ENCODE measurements at regions of chr3 and their contacts with region 1.

Region 1: GRCh38 chr3:158644345-158644908 is at the start of gene GFM1:
- DNase-seq: peak; percentile 75
- ATAC-seq: peak; percentile 96
- H3K4me3 Mint-ChIP-seq: peak within 1 kb of the TSS; percentile 99
- H3K27ac Mint-ChIP-seq: peak within 1 kb of the TSS; percentile 90
- H3K4me1 Mint-ChIP-seq: peaks cover 24% of the 10 kb centered on the region
- H3K27me3 Mint-ChIP-seq: no peaks in the 10 kb centered on the region
- CTCF ChIP-seq: peak; percentile 46
- total RNA-seq, gene GFM1: 46.8 and 56.4 TPM in 2 replicates

Region 2: DNA sequence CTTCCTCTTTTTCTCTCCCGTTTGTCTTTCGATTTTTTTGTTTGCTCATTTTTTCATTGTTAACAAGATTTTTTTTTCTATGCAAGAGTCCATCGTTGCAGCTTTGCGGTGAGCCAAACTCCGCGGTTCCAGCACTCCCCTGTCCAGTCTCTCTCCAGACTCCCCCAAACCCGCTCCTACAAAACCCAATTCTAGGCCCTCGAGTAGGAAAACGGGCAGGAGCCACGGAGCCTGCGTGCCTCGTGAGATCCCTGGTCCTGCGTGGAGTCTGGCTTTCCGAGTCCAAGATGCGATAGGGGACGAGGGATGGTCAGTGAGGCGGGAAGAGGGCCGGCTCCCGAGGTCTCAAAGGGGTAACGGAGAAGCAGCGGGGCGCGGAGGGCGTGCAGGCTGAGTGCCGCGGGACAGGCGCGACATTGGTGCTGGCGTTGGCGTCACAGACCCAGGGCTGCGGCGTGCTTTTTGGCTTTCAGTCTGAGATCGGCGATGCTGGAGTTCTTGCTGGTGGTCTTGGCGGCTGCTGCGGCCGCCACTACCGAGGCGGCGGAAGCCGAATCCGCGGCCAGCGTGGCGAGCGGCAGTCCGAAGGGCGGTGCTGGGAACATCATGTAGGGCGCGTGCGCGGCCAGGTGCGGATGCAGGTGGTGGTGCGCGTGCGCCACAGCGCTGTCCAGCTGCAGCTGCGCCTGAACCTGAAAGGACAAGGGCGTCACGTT is 546.7 kb before region 1 on chr3:
- CTCF ChIA-PET with region 1: no interaction called
- POLR2A ChIA-PET with region 1: no interaction called
- intact Hi-C with region 1: loop called (anchors 5 kb)
- DNase-seq: peak; percentile 79
- ATAC-seq: peak; percentile 93
- H3K4me3 Mint-ChIP-seq: peak overlapping the region; percentile 98
- H3K27ac Mint-ChIP-seq: peak overlapping the region; percentile 74
- H3K4me1 Mint-ChIP-seq: peaks cover 22% of the 10 kb centered on the region
- H3K27me3 Mint-ChIP-seq: peaks cover 57% of the 10 kb centered on the region
- CTCF ChIP-seq: no peak

Region 3: GRCh38 chr3:158140396-158140795 is 504.0 kb before region 1 on chr3:
- CTCF ChIA-PET with region 1: no interaction called
- POLR2A ChIA-PET with region 1: no interaction called
- intact Hi-C with region 1: no loop called
- DNase-seq: no peak
- ATAC-seq: no peak
- H3K4me3 Mint-ChIP-seq: no peak overlapping the region
- H3K27ac Mint-ChIP-seq: no peak overlapping the region
- H3K4me1 Mint-ChIP-seq: no peaks in the 10 kb centered on the region
- H3K27me3 Mint-ChIP-seq: no peaks in the 10 kb centered on the region
- CTCF ChIP-seq: no peak

Region 4: DNA sequence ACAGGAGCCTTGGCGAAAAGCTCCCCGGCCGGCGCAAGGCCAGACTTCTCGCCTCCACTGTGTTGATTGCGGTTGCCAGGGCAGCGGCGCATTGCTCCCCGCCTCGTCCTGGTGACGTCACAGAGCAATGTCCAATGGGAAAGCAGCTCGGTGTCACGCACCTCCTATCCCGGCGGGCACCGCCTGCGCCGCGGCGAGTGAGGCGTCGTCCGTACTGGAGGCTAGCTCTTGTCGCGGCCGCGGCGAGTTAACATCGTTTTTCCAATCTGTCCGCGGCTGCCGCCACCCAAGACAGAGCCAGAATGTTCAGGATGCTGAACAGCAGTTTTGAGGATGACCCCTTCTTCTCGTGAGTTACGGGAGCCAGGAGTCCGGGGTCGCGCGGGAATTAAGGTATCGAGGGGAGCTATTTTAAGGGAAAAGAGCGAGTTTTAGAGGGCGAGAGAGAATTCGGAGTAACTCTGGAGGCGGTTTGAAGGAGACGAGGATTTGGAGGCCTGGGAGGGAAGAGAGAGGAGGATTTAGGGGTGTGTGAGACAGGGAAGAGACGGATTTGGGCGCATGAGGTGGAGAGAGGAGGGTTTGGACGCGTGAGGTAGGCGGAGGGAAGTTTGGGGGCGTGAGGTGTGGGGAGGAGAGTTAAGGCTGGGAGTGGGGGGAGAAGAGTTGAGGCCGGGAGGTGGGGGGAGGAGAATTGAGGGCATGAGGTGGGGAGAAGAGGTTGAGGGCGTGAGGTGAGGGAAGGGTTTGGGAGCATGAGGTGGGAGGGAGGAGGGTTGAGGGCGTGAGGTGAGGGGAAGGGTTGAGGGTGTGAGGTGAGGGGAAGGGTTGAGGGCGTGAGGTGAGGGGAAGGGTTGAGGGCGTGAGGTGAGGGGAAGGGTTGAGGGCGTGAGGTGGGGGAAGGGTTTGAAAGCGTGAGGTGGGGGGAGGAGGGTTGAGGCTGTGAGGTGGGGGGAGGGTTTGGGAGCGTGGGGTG is 73.1 kb before region 1 on chr3 and contains the start of gene MLF1:
- CTCF ChIA-PET with region 1: no interaction called
- POLR2A ChIA-PET with region 1: no interaction called
- intact Hi-C with region 1: loop called (anchors 2 kb)
- DNase-seq: peak; percentile 64
- ATAC-seq: peak; percentile 97
- H3K4me3 Mint-ChIP-seq: peak within 1 kb of the TSS; percentile 85
- H3K27ac Mint-ChIP-seq: peak within 1 kb of the TSS; percentile 59
- H3K4me1 Mint-ChIP-seq: peaks cover 12% of the 10 kb centered on the region
- H3K27me3 Mint-ChIP-seq: peaks cover 42% of the 10 kb centered on the region
- CTCF ChIP-seq: no peak
- total RNA-seq, gene MLF1: not detected in 2 replicates

Region 5: DNA sequence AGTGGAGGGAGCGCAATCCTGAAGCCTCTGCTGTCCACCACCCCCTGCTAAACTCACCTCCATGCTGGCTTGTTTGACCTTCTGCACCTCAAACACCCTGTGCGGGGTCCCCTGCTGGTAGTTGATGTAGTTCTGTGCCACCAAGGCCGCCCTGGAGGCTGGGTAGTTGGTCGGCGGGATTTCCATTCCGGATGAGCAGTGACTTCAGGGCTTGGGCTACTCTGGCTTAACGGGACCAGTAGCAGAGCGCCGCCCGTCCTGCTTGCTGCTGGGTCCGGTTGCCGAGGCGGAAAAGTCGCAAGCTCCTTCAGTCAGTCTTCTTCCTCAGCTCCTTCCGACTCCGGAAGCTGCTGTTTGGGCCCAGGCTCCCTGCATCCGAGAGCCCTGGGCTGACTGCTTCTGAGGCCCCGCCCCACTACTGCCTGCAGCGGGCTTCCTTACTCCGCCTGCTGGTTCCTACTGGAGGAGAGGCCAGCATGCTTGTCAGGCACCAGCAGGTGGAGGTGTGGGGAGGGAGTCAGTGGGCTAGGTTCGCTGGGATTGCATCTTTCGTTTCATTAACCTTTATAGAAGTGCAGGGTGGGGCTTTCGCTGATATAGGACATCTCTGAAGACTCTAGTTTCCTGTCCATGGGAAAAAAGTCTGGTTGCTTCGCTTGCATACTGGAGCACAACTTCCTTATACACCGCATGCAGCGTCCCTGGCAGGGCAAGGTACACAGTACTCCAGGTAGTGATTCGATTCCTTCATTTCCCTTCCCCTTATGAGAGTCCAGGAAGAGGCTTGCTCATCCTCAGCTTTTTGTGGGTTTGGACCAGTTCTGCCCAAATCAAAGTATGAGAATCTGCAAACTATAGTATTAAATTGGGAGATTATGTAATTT is 28.1 kb after region 1 on chr3 and contains the start of gene LXN:
- CTCF ChIA-PET with region 1: interaction called, 6 read pairs
- POLR2A ChIA-PET with region 1: interaction called, 10 read pairs
- intact Hi-C with region 1: loop called (anchors 1 kb)
- DNase-seq: peak; percentile 54
- ATAC-seq: peak; percentile 98
- H3K4me3 Mint-ChIP-seq: peak within 1 kb of the TSS; percentile 94
- H3K27ac Mint-ChIP-seq: peak within 1 kb of the TSS; percentile 86
- H3K4me1 Mint-ChIP-seq: peaks cover 21% of the 10 kb centered on the region
- H3K27me3 Mint-ChIP-seq: no peaks in the 10 kb centered on the region
- CTCF ChIP-seq: no peak
- total RNA-seq, gene LXN: 5.2 and 5.9 TPM in 2 replicates

Region 6: GRCh38 chr3:158801696-158802408 is 157.4 kb after region 1 on chr3 and contains the start of gene MFSD1:
- CTCF ChIA-PET with region 1: interaction called, 7 read pairs
- POLR2A ChIA-PET with region 1: interaction called, 25 read pairs
- intact Hi-C with region 1: loop called (anchors 1 kb)
- DNase-seq: peak; percentile 82
- ATAC-seq: peak; percentile 89
- H3K4me3 Mint-ChIP-seq: peak within 1 kb of the TSS; percentile 94
- H3K27ac Mint-ChIP-seq: peak within 1 kb of the TSS; percentile 87
- H3K4me1 Mint-ChIP-seq: peaks cover 37% of the 10 kb centered on the region
- H3K27me3 Mint-ChIP-seq: no peaks in the 10 kb centered on the region
- CTCF ChIP-seq: no peak
- total RNA-seq, gene MFSD1: 36.8 and 41.6 TPM in 2 replicates